MCF 10A (cell line): ENCODE measurements at regions of chr11 and their contacts with region 1.

Region 1: GRCh38 chr11:122167100-122167499 is 51.1 kb upstream of the BLID start:
- DNase-seq: peak; percentile 84
- H3K4me3 Mint-ChIP-seq: peak overlapping the region; percentile 39
- H3K27ac Mint-ChIP-seq: peak overlapping the region; percentile 96
- H3K4me1 Mint-ChIP-seq: peaks cover 68% of the 10 kb centered on the region
- H3K27me3 Mint-ChIP-seq: no peaks in the 10 kb centered on the region
- CTCF ChIP-seq: no peak

Region 2: GRCh38 chr11:122036018-122036417 is 131.1 kb before region 1 on chr11:
- CTCF ChIA-PET with region 1: no interaction called
- POLR2A ChIA-PET with region 1: no interaction called
- intact Hi-C with region 1: no loop called
- DNase-seq: no peak
- H3K4me3 Mint-ChIP-seq: no peak overlapping the region
- H3K27ac Mint-ChIP-seq: no peak overlapping the region
- H3K4me1 Mint-ChIP-seq: peaks cover 25% of the 10 kb centered on the region
- H3K27me3 Mint-ChIP-seq: no peaks in the 10 kb centered on the region
- CTCF ChIP-seq: no peak

Region 3: DNA sequence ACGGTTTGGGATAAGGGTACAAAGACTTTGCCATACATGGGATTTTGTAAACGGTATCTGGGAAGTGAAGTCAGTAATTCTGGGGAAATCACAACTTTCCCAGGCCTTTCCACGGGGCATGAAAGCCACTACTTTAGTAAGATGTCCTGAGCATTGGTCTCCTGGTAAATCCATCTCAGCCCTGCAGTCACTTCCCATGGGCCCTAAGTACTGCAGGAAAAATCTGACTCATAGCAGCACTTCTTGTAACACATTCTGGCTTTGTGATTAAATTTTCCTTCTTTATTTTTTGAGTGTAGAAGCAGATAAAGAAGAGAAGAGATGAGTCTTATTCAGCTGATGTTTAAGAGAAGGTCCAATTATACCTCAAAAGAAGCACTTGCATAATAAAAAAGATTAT is 118.7 kb before region 1 on chr11:
- CTCF ChIA-PET with region 1: no interaction called
- POLR2A ChIA-PET with region 1: no interaction called
- intact Hi-C with region 1: no loop called
- DNase-seq: no peak
- H3K4me3 Mint-ChIP-seq: no peak overlapping the region
- H3K27ac Mint-ChIP-seq: no peak overlapping the region
- H3K4me1 Mint-ChIP-seq: peaks cover 7% of the 10 kb centered on the region
- H3K27me3 Mint-ChIP-seq: no peaks in the 10 kb centered on the region
- CTCF ChIP-seq: no peak

Region 4: GRCh38 chr11:122095681-122096262 is 71.3 kb before region 1 on chr11:
- CTCF ChIA-PET with region 1: interaction called, 10 read pairs
- POLR2A ChIA-PET with region 1: interaction called, 290 read pairs
- intact Hi-C with region 1: no loop called
- DNase-seq: no peak
- H3K4me3 Mint-ChIP-seq: no peak overlapping the region
- H3K27ac Mint-ChIP-seq: no peak overlapping the region
- H3K4me1 Mint-ChIP-seq: peaks cover 31% of the 10 kb centered on the region
- H3K27me3 Mint-ChIP-seq: no peaks in the 10 kb centered on the region
- CTCF ChIP-seq: no peak

Region 5: GRCh38 chr11:122179961-122180834 is 13.1 kb after region 1 on chr11:
- CTCF ChIA-PET with region 1: interaction called, 3 read pairs
- POLR2A ChIA-PET with region 1: interaction called, 57 read pairs
- intact Hi-C with region 1: loop called (anchors 2 kb)
- DNase-seq: peak; percentile 95
- H3K4me3 Mint-ChIP-seq: peak overlapping the region; percentile 67
- H3K27ac Mint-ChIP-seq: peak overlapping the region; percentile 90
- H3K4me1 Mint-ChIP-seq: peaks cover 62% of the 10 kb centered on the region
- H3K27me3 Mint-ChIP-seq: no peaks in the 10 kb centered on the region
- CTCF ChIP-seq: no peak

Region 6: DNA sequence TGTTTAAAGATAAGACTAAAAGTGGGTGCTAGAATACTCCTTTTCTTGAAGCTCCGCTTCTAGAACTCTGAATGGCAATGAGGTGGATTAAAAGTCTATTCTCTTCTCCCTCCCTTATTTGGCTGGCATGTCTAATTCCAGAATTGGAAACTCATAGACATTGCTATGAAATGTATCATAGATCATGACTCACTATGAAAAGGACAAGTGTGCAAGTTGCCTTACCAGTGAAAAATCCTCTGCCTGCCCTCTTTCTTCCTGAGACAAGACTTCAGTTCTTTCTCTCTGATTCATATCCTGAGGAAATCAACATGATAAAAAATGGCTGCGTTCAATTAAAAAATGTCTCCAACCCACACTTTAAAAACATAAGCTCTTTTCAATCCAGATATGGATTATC is 22.1 kb after region 1 on chr11:
- CTCF ChIA-PET with region 1: interaction called, 8 read pairs
- POLR2A ChIA-PET with region 1: interaction called, 31 read pairs
- intact Hi-C with region 1: loop called (anchors 1 kb)
- DNase-seq: peak; percentile 93
- H3K4me3 Mint-ChIP-seq: peak overlapping the region; percentile 18
- H3K27ac Mint-ChIP-seq: peak overlapping the region; percentile 83
- H3K4me1 Mint-ChIP-seq: peaks cover 38% of the 10 kb centered on the region
- H3K27me3 Mint-ChIP-seq: no peaks in the 10 kb centered on the region
- CTCF ChIP-seq: no peak